Mammary epithelial cell (primary cell): ENCODE measurements at regions of chr12 and their contacts with region 1.

Region 1: GRCh38 chr12:121793838-121794533 is 498 bp upstream of the RHOF start:
- DNase-seq: peak; percentile 88
- H3K4me3 ChIP-seq: peak overlapping the region; percentile 16 to 54 (median 52)
- H3K27ac ChIP-seq: peak overlapping the region; percentile 55
- H3K4me1 ChIP-seq: peaks cover 54% of the 10 kb centered on the region
- H3K27me3 ChIP-seq: no peaks in the 10 kb centered on the region
- CTCF ChIP-seq: peak; percentile 97 to 100

Region 2: GRCh38 chr12:121550974-121551634 is 242.9 kb before region 1 on chr12:
- CTCF ChIA-PET with region 1: interaction called, 10 read pairs
- dilution Hi-C with region 1: no loop called
- in situ Hi-C with region 1: no loop called
- intact Hi-C with region 1: no loop called
- DNase-seq: no peak
- H3K4me3 ChIP-seq: no peak overlapping the region
- H3K27ac ChIP-seq: no peak overlapping the region
- H3K4me1 ChIP-seq: no peaks in the 10 kb centered on the region
- H3K27me3 ChIP-seq: no peaks in the 10 kb centered on the region
- CTCF ChIP-seq: no peak

Region 3: GRCh38 chr12:121773011-121773777 is 20.8 kb before region 1 on chr12:
- CTCF ChIA-PET with region 1: interaction called, 5 read pairs
- dilution Hi-C with region 1: no loop called
- in situ Hi-C with region 1: no loop called
- intact Hi-C with region 1: loop called (anchors 1 kb)
- DNase-seq: peak; percentile 64
- H3K4me3 ChIP-seq: no peak overlapping the region
- H3K27ac ChIP-seq: no peak overlapping the region
- H3K4me1 ChIP-seq: peaks cover 10% of the 10 kb centered on the region
- H3K27me3 ChIP-seq: no peaks in the 10 kb centered on the region
- CTCF ChIP-seq: peak; percentile 77 to 95

Region 4: DNA sequence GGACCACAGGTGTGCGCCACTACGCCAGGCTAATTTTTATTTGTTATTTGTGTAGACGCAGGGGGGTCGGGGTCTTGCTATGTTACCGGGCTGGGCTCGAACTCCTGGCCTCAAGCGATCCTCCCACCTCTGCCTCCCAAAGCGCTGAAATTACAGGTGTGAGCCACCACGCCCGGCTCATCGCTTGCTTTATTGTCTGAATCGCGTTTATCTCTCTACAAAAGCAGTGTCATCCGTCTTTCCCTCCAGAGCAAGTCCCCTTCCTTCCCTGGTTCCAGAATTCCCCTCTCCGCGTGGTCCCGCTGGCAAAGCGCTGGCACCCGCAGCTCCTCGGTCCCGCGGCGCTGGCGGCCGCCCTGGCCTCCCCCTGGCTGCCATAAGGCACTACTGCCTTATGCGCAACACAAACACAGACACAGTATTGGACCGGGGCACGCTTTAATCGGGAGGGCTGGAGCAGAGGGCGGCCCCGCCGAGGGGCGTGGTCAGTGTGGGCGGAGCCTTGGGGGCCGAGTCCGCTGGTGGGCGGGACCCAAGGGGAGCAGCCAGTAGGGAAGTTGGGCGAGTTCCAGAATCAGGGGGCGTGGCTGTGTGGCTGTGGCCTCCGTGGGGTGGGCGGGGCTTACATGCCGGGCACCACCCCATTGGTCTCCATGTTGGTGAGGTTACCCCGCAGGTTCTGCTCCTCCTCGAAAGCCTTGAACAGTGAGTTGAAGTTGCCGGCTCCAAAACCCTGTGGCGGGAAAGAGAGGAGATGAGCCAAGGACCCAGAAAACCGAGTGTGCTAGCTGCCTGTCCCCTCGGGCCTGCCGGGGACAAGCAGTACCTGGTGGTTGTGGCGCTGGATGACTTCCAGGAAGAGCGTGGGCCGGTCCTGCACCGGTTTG is 45.4 kb after region 1 on chr12:
- CTCF ChIA-PET with region 1: interaction called, 11 read pairs
- dilution Hi-C with region 1: no loop called
- in situ Hi-C with region 1: no loop called
- intact Hi-C with region 1: loop called (anchors 2 kb)
- DNase-seq: peak; percentile 96
- H3K4me3 ChIP-seq: peak overlapping the region; percentile 43 to 74 (median 70)
- H3K27ac ChIP-seq: peak overlapping the region; percentile 39
- H3K4me1 ChIP-seq: no peaks in the 10 kb centered on the region
- H3K27me3 ChIP-seq: no peaks in the 10 kb centered on the region
- CTCF ChIP-seq: peak in 1 of 2 donors; percentile 32

Region 5: DNA sequence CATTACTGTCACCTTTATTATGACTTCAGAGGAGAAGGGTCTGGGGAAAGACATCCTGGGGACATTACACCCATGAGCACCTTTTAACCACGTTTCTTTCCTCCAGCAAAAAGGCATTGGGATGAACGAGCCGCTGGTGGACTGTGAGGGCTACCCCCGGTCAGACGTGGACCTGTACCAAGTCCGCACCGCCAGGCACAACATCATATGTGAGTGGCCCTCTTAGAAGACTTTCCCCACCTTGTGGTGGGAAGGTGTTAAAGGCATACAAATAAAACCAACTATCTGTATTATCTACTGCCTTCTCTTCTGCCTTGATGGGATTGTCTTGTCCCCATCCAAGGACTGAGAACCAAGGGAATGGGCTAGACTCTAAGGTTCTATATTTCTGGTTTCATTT is 100.6 kb after region 1 on chr12:
- CTCF ChIA-PET with region 1: no interaction called
- dilution Hi-C with region 1: no loop called
- in situ Hi-C with region 1: loop called (anchors 5 to 10 kb)
- intact Hi-C with region 1: no loop called
- DNase-seq: no peak
- H3K4me3 ChIP-seq: no peak overlapping the region
- H3K27ac ChIP-seq: peak overlapping the region; percentile 64
- H3K4me1 ChIP-seq: peaks cover 27% of the 10 kb centered on the region
- H3K27me3 ChIP-seq: no peaks in the 10 kb centered on the region
- CTCF ChIP-seq: peak; percentile 19 to 48

Region 6: DNA sequence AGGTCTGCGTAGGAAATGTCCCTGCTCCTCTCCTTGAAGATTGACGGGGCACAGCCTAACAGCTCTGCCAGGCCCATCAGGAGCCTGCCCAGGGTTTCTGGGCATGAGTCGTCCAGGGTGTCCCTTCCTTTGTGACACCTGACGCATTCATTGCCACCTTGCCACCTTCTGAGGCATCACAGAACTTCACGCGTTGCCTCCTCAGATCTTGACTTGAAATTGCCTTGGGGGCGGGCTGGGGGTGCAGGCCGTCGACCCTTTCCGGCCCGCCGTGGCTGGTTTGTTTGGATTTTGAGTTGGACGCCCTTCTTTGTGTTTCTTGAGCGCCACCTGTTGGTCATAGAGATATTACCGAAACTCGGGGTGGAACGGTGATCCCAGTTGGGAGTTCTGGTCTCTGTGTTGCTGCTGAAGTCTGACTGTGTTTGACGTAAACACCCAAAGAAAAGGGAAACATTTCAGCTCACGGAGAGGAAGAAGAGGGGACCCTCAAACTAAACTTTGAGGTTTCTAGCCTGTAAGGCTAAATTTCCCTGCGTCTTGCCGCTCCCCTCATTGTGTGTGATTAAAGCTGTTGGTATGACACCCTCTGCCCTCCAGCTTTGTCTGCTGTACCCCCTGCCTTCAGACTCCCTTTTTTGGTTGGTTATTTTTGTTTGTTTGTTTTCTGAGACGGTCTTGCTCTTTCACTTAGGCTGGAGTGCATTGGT is 329.2 kb after region 1 on chr12:
- CTCF ChIA-PET with region 1: no interaction called
- dilution Hi-C with region 1: no loop called
- in situ Hi-C with region 1: no loop called
- intact Hi-C with region 1: loop called (anchors 5 kb)
- DNase-seq: peak; percentile 65
- H3K4me3 ChIP-seq: no peak overlapping the region
- H3K27ac ChIP-seq: no peak overlapping the region
- H3K4me1 ChIP-seq: peaks cover 9% of the 10 kb centered on the region
- H3K27me3 ChIP-seq: no peaks in the 10 kb centered on the region
- CTCF ChIP-seq: peak; percentile 52 to 71